ENCODE measurements at regions of chr6 and their contacts with region 1.

Region 1: GRCh38 chr6:27518881-27519795 is 46.2 kb upstream of the ZNF184 start:
- DNase-seq: peak; percentile 77 to 81
- H3K4me3 ChIP-seq: peak overlapping the region; percentile 64
- H3K4me1 ChIP-seq: peaks cover 8% of the 10 kb centered on the region
- H3K27me3 ChIP-seq: no peaks in the 10 kb centered on the region; the same call in 1 of the 2 replicates

Region 2: GRCh38 chr6:27177485-27178406 is 341.4 kb before region 1 on chr6:
- in situ Hi-C with region 1: loop called (anchors 25 kb)
- DNase-seq: peak; percentile 76 to 83
- H3K4me3 ChIP-seq: peak overlapping the region; percentile 80
- H3K4me1 ChIP-seq: peaks cover 3% of the 10 kb centered on the region; the same call in 1 of the 2 replicates
- H3K27me3 ChIP-seq: no peaks in the 10 kb centered on the region